GM10248 (cell line): ENCODE measurements at regions of chr11 and their contacts with region 1.

Region 1: GRCh38 chr11:72872012-72872411 is 57.8 kb downstream of the ATG16L2 start:
- DNase-seq: no peak
- CTCF ChIP-seq: no peak

Region 2: DNA sequence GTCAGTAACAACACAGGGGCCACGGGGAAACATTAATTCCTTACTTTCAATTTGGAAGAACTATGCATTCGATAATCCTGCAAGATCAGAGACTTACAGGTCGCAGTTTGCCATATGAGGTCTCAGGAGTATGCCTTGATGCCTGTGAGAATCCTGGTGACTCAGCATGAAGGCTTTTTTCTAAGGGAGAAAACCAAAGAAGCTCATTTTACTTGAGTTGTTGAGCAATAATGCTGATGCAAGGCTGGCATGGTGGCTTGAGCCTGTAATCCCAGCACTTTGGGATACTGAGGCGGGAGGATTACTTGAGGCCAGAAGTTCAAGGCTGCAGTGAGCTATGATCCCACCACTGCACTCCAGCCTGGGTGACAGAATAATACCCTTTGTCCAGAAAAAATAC is 31.2 kb before region 1 on chr11:
- CTCF ChIA-PET with region 1: no interaction called
- POLR2A ChIA-PET with region 1: interaction called, 10 read pairs
- DNase-seq: no peak
- CTCF ChIP-seq: no peak

Region 3: DNA sequence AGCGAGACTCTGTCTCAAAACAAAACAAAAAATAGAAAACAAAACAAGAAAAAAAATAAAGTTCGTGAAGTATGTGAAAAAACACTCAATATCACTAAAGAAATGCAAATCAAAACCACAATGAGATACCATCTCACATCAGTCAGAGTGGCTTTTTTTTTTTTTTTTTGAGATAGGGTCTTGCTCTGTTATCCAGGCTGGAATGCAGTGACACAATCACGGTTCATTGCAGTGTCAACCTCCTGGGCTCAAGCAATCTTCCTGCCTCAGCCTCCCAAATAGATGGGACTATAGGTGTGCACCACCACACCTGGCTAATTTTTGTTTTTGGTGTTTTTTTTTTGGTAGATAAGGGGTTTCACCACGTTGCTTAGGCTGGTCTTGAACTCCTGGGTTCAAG is 20.3 kb before region 1 on chr11:
- CTCF ChIA-PET with region 1: no interaction called
- POLR2A ChIA-PET with region 1: no interaction called
- DNase-seq: no peak
- CTCF ChIP-seq: no peak